ENCODE measurements at regions of chr2 and their contacts with region 1.

Region 1: GRCh38 chr2:37832590-37833197 is 92.4 kb upstream of the RMDN2 start:
- DNase-seq: peak; percentile 73
- H3K4me3 ChIP-seq: no peak overlapping the region
- H3K27ac ChIP-seq: no peak overlapping the region
- H3K4me1 ChIP-seq: no peaks in the 10 kb centered on the region
- H3K27me3 ChIP-seq: no peaks in the 10 kb centered on the region
- CTCF ChIP-seq: peak; percentile 75 to 87

Region 2: GRCh38 chr2:37287966-37288365 is 544.7 kb before region 1 on chr2:
- CTCF ChIA-PET with region 1: no interaction called
- dilution Hi-C with region 1: no loop called
- in situ Hi-C with region 1: no loop called
- intact Hi-C with region 1: loop called (anchors 2 kb)
- DNase-seq: no peak
- H3K4me3 ChIP-seq: no peak overlapping the region
- H3K27ac ChIP-seq: no peak overlapping the region
- H3K4me1 ChIP-seq: no peaks in the 10 kb centered on the region
- H3K27me3 ChIP-seq: no peaks in the 10 kb centered on the region
- CTCF ChIP-seq: peak; percentile 33 to 41

Region 3: GRCh38 chr2:37365669-37366068 is 467.0 kb before region 1 on chr2:
- CTCF ChIA-PET with region 1: no interaction called
- dilution Hi-C with region 1: no loop called
- in situ Hi-C with region 1: no loop called
- intact Hi-C with region 1: no loop called
- DNase-seq: peak; percentile 60
- H3K4me3 ChIP-seq: no peak overlapping the region
- H3K27ac ChIP-seq: no peak overlapping the region
- H3K4me1 ChIP-seq: peaks cover 12% of the 10 kb centered on the region
- H3K27me3 ChIP-seq: no peaks in the 10 kb centered on the region
- CTCF ChIP-seq: no peak

Region 4: GRCh38 chr2:37397166-37397565 is 435.5 kb before region 1 on chr2:
- CTCF ChIA-PET with region 1: interaction called, 16 read pairs
- dilution Hi-C with region 1: loop called (anchors 25 kb)
- in situ Hi-C with region 1: no loop called
- intact Hi-C with region 1: loop called (anchors 1 kb)
- DNase-seq: no peak
- H3K4me3 ChIP-seq: no peak overlapping the region
- H3K27ac ChIP-seq: no peak overlapping the region
- H3K4me1 ChIP-seq: no peaks in the 10 kb centered on the region
- H3K27me3 ChIP-seq: no peaks in the 10 kb centered on the region
- CTCF ChIP-seq: no peak

Region 5: DNA sequence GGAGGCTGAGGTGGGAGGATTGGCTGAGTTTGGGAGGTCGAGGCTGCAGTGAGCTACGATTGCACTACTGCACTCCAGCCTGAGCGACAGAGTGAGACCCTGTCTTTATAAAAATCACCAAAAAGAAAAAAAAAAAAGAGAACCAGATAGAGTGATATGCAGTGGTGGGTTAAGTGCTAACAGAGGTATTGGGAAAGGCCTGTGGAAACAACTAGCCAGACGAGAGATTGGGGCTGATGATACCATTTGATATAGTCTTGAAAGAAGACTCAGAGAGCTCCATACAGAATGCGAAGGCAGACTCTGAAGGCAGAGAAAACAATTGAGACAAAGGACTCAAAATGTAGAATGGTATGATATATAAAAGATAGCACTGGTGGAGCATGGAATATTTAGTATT is 295.4 kb before region 1 on chr2:
- CTCF ChIA-PET with region 1: no interaction called
- dilution Hi-C with region 1: no loop called
- in situ Hi-C with region 1: no loop called
- intact Hi-C with region 1: loop called (anchors 5 kb)
- DNase-seq: no peak
- H3K4me3 ChIP-seq: no peak overlapping the region
- H3K27ac ChIP-seq: no peak overlapping the region
- H3K4me1 ChIP-seq: no peaks in the 10 kb centered on the region
- H3K27me3 ChIP-seq: no peaks in the 10 kb centered on the region
- CTCF ChIP-seq: no peak

Region 6: DNA sequence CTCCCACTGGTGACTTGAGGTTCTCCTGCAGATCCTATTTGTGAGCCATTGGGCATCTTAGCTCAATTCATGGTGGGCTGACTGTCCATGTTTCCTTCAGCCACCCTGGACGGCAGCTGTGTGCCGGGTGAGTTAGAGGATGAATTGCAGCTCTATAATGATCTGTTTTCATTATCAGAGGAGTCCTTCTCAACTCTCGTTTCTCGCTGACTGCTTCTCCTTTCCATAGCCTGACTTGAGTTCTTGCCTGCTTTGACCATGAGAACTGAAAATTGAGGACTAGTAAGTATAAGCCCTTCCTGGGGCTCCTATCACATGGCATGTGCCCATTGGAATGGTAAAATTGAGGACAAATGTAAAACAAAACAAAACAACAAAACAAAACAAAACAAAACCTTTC is 283.1 kb before region 1 on chr2:
- CTCF ChIA-PET with region 1: no interaction called
- dilution Hi-C with region 1: no loop called
- in situ Hi-C with region 1: no loop called
- intact Hi-C with region 1: loop called (anchors 1 kb)
- DNase-seq: no peak
- H3K4me3 ChIP-seq: no peak overlapping the region
- H3K27ac ChIP-seq: no peak overlapping the region
- H3K4me1 ChIP-seq: peaks cover 10% of the 10 kb centered on the region
- H3K27me3 ChIP-seq: no peaks in the 10 kb centered on the region
- CTCF ChIP-seq: no peak